HEK293 (cell line): ENCODE measurements at regions of chr14 and their contacts with region 1.

Region 1: DNA sequence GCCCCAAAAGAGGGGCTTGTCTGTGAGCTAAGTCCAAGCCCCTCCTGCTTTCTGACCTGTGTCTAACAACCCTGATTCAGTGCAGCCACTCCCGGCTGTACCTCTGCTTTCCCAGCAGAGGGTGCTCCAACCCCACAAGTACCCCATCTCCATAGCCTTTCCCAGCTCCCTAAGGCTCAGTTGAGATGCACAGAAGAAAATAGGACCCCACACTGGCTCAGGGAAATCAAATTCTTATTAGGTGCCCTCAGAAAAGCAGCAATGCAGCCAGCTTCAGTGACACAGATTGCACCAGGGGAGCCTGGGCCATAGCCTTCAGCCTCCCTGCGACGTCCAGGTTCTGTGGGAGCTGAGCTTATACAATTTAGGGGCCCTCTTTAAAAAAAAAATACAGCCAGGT is 49.9 kb downstream of the LRRC74A start:
- H3K4me3 ChIP-seq: no peak overlapping the region
- H3K27ac ChIP-seq: no peak overlapping the region
- H3K4me1 ChIP-seq: no peaks in the 10 kb centered on the region
- CTCF ChIP-seq: peak; percentile 64

Region 2: GRCh38 chr14:76710056-76711010 is 165.7 kb before region 1 on chr14:
- CTCF ChIA-PET with region 1: interaction called, 15 read pairs
- POLR2A ChIA-PET with region 1: no interaction called
- H3K4me3 ChIP-seq: no peak overlapping the region
- H3K27ac ChIP-seq: no peak overlapping the region
- H3K4me1 ChIP-seq: no peaks in the 10 kb centered on the region
- CTCF ChIP-seq: peak; percentile 29; the same call in 1 of the 2 replicates

Region 3: DNA sequence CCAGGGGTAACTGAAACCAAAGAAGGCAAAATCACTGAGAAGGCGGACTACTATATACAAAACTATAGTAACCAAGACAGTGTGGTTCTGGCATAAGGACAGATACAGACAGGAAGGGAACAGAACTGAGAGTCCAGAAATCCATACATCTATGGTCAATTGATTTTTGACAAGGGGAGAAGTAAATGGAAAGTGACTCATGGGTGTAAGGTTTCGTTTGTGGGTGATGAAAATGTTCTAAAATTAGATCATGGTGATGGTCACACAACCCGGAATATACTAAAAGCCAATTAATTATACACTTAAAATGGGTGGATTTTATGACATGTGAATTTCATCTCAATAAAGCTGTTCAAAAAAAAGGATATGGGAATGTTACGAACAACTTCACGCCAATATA is 82.1 kb before region 1 on chr14:
- CTCF ChIA-PET with region 1: no interaction called
- POLR2A ChIA-PET with region 1: no interaction called
- H3K4me3 ChIP-seq: no peak overlapping the region
- H3K27ac ChIP-seq: no peak overlapping the region
- H3K4me1 ChIP-seq: no peaks in the 10 kb centered on the region
- CTCF ChIP-seq: no peak

Region 4: DNA sequence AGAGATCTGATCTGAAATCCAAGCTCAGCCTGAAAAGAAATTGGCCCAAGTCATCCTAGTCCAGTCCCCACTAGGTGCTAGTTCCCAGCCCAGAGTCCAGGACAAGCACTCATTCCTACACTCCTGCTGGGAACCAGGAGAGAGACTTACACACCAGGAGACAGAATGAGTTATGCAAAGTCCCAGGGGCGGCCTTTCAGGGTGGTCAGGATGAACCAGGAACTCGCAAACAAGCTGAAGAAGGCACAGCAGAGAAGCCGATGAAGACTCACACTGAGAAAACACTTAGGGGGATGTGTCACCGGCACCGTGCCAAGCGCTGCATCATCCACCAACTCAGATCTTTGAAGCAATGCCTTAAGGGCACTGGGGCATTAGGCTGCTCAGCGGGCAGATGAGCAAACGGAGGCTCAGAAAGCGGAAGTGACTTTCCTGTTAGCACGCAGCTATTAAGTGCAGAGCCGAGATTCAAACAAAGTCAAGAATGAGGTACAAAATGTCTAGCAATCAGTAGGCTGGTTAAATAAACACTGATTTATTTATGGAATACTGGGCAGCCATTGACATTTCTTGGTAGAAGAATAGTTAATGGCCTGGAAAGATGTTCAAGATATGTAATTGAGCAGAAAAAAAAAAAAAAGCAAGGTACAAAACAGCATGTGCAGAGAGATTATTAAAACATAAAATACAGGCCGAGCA is 28.8 kb after region 1 on chr14:
- CTCF ChIA-PET with region 1: interaction called, 30 read pairs
- POLR2A ChIA-PET with region 1: interaction called, 6 read pairs
- H3K4me3 ChIP-seq: no peak overlapping the region
- H3K27ac ChIP-seq: peak overlapping the region; percentile 49; the same call in 1 of the 2 replicates
- H3K4me1 ChIP-seq: peaks cover 15% of the 10 kb centered on the region
- CTCF ChIP-seq: no peak

Region 5: DNA sequence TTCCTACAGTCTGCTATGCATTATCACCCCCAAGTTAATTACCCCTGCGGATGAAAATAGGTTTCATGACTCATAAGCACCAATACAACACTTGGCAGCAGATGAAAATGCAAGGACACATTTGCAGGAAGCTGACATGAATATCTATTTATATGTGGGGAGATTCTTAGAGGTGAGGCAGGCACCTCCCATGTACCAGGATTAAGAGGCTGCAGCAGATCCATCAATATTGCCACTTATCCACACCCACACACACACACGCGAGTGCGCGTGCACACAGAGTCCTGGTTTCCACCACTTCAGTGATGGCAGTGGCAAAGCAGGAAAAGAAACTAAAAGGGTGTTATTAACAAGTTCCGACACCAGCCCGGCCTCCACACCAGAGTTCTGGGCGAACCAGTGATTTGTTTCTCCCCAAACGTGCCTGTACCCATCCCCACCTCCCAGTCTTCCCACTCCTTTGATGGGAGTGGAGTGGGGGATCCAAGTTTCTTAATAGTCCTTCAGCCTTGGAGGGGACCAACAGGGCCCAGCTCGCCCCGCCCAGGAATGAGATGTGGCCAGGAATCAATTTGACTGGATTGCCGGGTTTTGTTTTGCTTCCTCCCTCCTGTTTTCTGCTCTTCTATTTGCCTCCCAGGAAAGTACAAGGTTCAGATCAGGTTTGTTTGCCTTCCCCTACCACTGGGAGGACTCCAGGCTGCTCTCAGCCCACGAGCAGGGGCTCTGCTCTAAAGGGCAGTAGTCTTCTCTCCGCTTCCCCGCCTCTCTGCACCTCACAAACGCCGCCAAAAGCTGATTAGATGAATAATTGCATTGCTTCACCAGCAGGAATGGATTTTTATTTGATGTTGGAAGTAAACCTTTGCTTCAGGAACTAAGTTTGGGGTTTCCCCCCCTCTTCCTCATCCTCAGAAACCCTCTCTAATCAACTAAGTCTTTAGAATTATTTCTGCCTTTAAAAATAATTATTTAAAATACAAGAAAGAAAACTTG is 147.2 kb after region 1 on chr14:
- CTCF ChIA-PET with region 1: interaction called, 10 read pairs
- POLR2A ChIA-PET with region 1: no interaction called
- H3K4me3 ChIP-seq: no peak overlapping the region
- H3K27ac ChIP-seq: peak overlapping the region; percentile 100
- H3K4me1 ChIP-seq: peaks cover 10% of the 10 kb centered on the region
- CTCF ChIP-seq: no peak

Region 6: GRCh38 chr14:77053046-77053841 is 177.2 kb after region 1 on chr14:
- CTCF ChIA-PET with region 1: interaction called, 77 read pairs
- POLR2A ChIA-PET with region 1: interaction called, 4 read pairs
- H3K4me3 ChIP-seq: no peak overlapping the region
- H3K27ac ChIP-seq: peak overlapping the region; percentile 20; the same call in 1 of the 2 replicates
- H3K4me1 ChIP-seq: peaks cover 4% of the 10 kb centered on the region; the same call in 1 of the 2 replicates
- CTCF ChIP-seq: peak; percentile 87

Region 7: DNA sequence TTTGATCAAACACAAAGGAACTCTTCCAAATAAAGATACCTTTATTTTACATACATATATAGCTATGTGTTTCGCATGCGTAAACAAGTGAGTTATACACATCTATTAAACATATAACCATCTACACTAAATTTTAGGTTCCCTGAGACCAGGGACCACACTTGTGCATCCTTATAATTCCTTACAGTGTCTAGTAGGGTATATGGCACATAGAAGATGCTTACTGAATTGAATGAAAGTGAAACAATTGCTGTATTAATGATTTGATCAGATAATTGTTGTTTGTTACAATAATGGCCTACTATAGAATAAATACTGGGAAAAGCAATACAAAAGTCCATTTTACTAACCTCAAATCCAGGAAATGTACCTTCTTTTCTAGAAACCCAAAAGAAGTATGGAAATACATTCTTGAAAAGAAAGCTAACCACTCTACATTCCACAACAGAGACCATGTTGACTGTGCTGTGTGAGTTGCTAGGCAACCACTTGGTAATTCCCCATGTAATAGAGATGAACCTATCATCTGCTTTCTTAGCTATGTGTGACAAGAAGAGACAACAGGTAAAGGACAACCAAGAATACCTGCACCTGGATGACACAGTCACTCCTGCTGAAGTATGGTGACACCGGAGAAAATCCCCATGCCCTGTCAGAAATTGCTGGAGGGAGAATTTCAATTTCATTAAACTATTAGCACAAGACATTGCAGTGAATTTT is 210.1 kb after region 1 on chr14:
- CTCF ChIA-PET with region 1: interaction called, 30 read pairs
- POLR2A ChIA-PET with region 1: no interaction called
- H3K4me3 ChIP-seq: no peak overlapping the region
- H3K27ac ChIP-seq: no peak overlapping the region
- H3K4me1 ChIP-seq: no peaks in the 10 kb centered on the region; the same call in 1 of the 2 replicates
- CTCF ChIP-seq: no peak

Region 8: DNA sequence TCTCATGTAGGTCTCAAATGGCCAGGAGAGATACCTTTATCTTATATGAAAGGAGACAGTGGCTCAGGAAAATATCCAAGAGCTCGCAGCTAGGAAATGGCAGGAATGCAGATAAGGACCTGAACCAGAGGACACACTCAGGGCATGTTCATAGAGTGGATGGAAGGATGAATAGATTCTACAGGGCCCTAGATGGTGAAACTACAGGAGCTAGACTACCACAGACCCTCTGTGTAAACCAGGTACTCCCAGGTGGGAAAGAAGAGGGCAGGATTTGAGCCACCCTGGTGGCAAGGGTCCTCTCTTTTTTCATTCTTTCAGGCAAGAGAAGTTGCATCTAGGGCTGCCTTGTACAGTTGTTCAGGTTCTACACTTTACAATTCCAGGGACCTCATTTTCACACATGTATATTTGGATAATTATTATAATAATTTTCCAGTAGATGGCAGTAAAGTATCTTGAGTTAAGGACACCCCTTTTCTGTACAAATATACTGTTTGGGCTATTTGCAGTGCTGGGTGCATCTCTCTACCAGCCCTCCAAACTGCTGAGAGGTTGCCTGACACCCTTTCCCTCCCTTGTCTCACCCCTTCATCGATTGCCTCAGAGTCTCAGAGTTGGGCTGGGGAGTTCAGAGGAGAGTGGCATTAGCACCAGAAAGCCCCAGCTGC is 276.0 kb after region 1 on chr14:
- CTCF ChIA-PET with region 1: interaction called, 35 read pairs
- POLR2A ChIA-PET with region 1: no interaction called
- H3K4me3 ChIP-seq: no peak overlapping the region
- H3K27ac ChIP-seq: no peak overlapping the region
- H3K4me1 ChIP-seq: no peaks in the 10 kb centered on the region
- CTCF ChIP-seq: no peak